OCI-LY7 (cell line): ENCODE measurements at regions of chr20 and their contacts with region 1.

Region 1: DNA sequence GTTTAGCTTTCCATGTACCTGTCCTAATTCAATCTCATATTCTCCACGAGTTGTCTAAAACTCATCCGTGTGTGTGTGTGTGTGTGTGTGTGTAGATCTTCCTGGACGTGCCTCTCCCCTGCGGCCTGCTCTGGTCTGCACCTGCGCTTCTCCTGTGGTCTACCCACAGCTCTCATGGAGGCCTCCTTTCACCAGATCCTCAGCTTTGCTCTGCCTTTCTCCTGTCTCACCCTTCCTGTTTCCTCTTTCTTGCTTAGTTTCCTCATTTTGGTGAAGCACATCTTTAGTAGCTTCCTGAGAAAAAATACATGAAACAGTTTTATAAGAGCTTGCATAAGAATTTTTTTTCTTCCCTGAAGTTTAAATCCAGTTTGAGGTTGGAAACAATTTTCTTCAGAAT is 18.1 kb downstream of the SLX4IP start:
- DNase-seq: peak; percentile 67
- H3K4me3 ChIP-seq: no peak overlapping the region
- H3K27ac ChIP-seq: peak overlapping the region; percentile 32
- H3K4me1 ChIP-seq: peaks cover 18% of the 10 kb centered on the region
- CTCF ChIP-seq: no peak

Region 2: GRCh38 chr20:10434467-10434831 is 18.8 kb before region 1 on chr20:
- CTCF ChIA-PET with region 1: no interaction called
- POLR2A ChIA-PET with region 1: interaction called, 11 read pairs
- intact Hi-C with region 1: no loop called
- DNase-seq: peak; percentile 90
- H3K4me3 ChIP-seq: peak overlapping the region; percentile 94
- H3K27ac ChIP-seq: peak overlapping the region; percentile 81
- H3K4me1 ChIP-seq: peaks cover 40% of the 10 kb centered on the region
- CTCF ChIP-seq: 0 out of 2 replicates have a peak, but pooled peaks have one; percentile 3